B cell (primary cell): ENCODE measurements at regions of chr15 and their contacts with region 1.

Region 1: DNA sequence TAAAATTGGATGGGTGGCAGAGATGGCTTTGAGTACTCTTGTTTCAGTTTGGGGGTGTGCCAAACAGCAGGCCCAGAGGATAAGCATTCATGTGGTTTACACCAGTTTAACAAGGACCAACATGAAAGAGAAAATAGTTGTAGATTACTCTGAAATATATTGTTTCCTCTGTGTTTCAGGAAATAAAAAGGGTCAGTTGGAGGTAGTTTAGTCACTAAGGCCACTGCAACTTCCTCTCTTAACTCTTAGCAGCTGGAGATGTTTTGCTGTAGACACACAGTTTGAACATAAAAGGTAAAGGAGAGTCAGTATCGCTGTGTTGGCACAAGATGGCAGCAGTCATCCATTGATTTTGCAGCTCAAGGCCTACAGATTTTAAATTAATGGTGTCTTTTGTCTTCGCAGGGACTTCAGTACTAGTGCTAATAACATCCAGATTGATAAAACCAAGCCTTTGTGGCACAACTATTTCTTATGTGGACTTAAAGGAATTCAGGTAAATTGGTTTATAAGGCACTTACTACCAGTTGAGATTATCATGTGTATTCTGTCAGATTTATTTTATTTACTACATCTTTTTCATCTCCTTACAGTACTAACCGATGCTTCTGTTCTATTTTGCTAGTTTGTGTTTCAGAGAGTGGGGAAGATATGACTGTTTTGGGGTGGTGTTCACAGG is 65.5 kb downstream of the GALK2 start:
- DNase-seq: peak; percentile 57
- ATAC-seq: peak; percentile 31
- H3K4me3 ChIP-seq: no peak overlapping the region
- H3K4me3 Mint-ChIP-seq: no peak overlapping the region
- H3K27ac ChIP-seq: no peak overlapping the region
- H3K27ac Mint-ChIP-seq: no peak overlapping the region
- H3K4me1 ChIP-seq: no peaks in the 10 kb centered on the region
- H3K4me1 Mint-ChIP-seq: peaks cover 8% of the 10 kb centered on the region
- H3K27me3 ChIP-seq: no peaks in the 10 kb centered on the region
- H3K27me3 Mint-ChIP-seq: no peaks in the 10 kb centered on the region
- CTCF ChIP-seq: peak; percentile 75

Region 2: GRCh38 chr15:49383266-49383665 is 147.7 kb after region 1 on chr15:
- CTCF ChIA-PET with region 1: no interaction called
- POLR2A ChIA-PET with region 1: no interaction called
- intact Hi-C with region 1: no loop called
- DNase-seq: no peak
- ATAC-seq: no peak
- H3K4me3 ChIP-seq: no peak overlapping the region
- H3K4me3 Mint-ChIP-seq: no peak overlapping the region
- H3K27ac ChIP-seq: no peak overlapping the region
- H3K27ac Mint-ChIP-seq: no peak overlapping the region
- H3K4me1 ChIP-seq: no peaks in the 10 kb centered on the region
- H3K4me1 Mint-ChIP-seq: no peaks in the 10 kb centered on the region
- H3K27me3 ChIP-seq: no peaks in the 10 kb centered on the region
- H3K27me3 Mint-ChIP-seq: peaks cover 8% of the 10 kb centered on the region
- CTCF ChIP-seq: no peak

Region 3: GRCh38 chr15:49421991-49422390 is 186.4 kb after region 1 on chr15:
- CTCF ChIA-PET with region 1: interaction called, 42 read pairs
- POLR2A ChIA-PET with region 1: no interaction called
- intact Hi-C with region 1: no loop called
- DNase-seq: peak; percentile 63
- ATAC-seq: peak; percentile 24
- H3K4me3 ChIP-seq: peak overlapping the region in 1 of 5 experiments; percentile 8
- H3K4me3 Mint-ChIP-seq: peak overlapping the region; percentile 33
- H3K27ac ChIP-seq: no peak overlapping the region
- H3K27ac Mint-ChIP-seq: peak overlapping the region; percentile 46
- H3K4me1 ChIP-seq: no peaks in the 10 kb centered on the region
- H3K4me1 Mint-ChIP-seq: peaks cover 3% of the 10 kb centered on the region
- H3K27me3 ChIP-seq: no peaks in the 10 kb centered on the region
- H3K27me3 Mint-ChIP-seq: peaks cover 4% of the 10 kb centered on the region
- CTCF ChIP-seq: peak; percentile 73

Region 4: GRCh38 chr15:50003786-50004334 is 768.3 kb after region 1 on chr15:
- CTCF ChIA-PET with region 1: interaction called, 12 read pairs
- POLR2A ChIA-PET with region 1: no interaction called
- intact Hi-C with region 1: no loop called
- DNase-seq: peak; percentile 69
- ATAC-seq: peak; percentile 87
- H3K4me3 ChIP-seq: no peak overlapping the region
- H3K4me3 Mint-ChIP-seq: no peak overlapping the region
- H3K27ac ChIP-seq: no peak overlapping the region
- H3K27ac Mint-ChIP-seq: no peak overlapping the region
- H3K4me1 ChIP-seq: peaks cover 4 to 8% of the 10 kb centered on the region in 2 donors
- H3K4me1 Mint-ChIP-seq: peaks cover 9% of the 10 kb centered on the region
- H3K27me3 ChIP-seq: no peaks in the 10 kb centered on the region
- H3K27me3 Mint-ChIP-seq: peaks cover 5% of the 10 kb centered on the region
- CTCF ChIP-seq: peak; percentile 50

Region 5: DNA sequence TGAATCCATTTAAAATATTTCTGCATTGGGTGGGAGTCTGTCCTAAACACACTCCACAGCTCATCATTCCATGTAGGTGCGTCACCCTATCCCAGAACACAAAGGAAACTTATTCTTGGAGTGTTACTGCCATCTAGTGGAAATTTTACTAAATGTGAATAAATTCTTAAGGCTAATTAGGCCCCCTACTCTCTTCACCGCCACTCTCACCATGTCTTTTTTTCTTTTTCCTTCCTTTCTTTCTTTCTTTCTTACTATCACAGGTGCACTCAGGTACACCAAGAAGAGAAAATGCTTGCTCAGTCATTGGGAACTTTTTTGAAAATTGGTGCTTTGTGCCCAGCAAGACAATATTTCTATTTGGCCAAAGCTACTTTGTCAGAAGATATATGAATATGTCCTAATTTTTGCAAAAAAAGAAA is 909.9 kb after region 1 on chr15:
- CTCF ChIA-PET with region 1: interaction called, 12 read pairs
- POLR2A ChIA-PET with region 1: no interaction called
- intact Hi-C with region 1: loop called (anchors 1 kb)
- DNase-seq: peak; percentile 64
- ATAC-seq: peak; percentile 33
- H3K4me3 ChIP-seq: no peak overlapping the region
- H3K4me3 Mint-ChIP-seq: no peak overlapping the region
- H3K27ac ChIP-seq: no peak overlapping the region
- H3K27ac Mint-ChIP-seq: no peak overlapping the region
- H3K4me1 ChIP-seq: no peaks in the 10 kb centered on the region
- H3K4me1 Mint-ChIP-seq: peaks cover 4% of the 10 kb centered on the region
- H3K27me3 ChIP-seq: no peaks in the 10 kb centered on the region
- H3K27me3 Mint-ChIP-seq: no peaks in the 10 kb centered on the region
- CTCF ChIP-seq: peak; percentile 81

Region 6: GRCh38 chr15:50315814-50316630 is 1080.4 kb after region 1 on chr15:
- CTCF ChIA-PET with region 1: no interaction called
- POLR2A ChIA-PET with region 1: no interaction called
- intact Hi-C with region 1: loop called (anchors 10 kb)
- DNase-seq: peak; percentile 57
- ATAC-seq: no peak
- H3K4me3 ChIP-seq: no peak overlapping the region
- H3K4me3 Mint-ChIP-seq: no peak overlapping the region
- H3K27ac ChIP-seq: no peak overlapping the region
- H3K27ac Mint-ChIP-seq: no peak overlapping the region
- H3K4me1 ChIP-seq: no peaks in the 10 kb centered on the region
- H3K4me1 Mint-ChIP-seq: peaks cover 12% of the 10 kb centered on the region
- H3K27me3 ChIP-seq: no peaks in the 10 kb centered on the region
- H3K27me3 Mint-ChIP-seq: no peaks in the 10 kb centered on the region
- CTCF ChIP-seq: peak; percentile 95